Endothelial cell of umbilical vein (primary cell): ENCODE measurements at regions of chr4 and their contacts with region 1.

Region 1: DNA sequence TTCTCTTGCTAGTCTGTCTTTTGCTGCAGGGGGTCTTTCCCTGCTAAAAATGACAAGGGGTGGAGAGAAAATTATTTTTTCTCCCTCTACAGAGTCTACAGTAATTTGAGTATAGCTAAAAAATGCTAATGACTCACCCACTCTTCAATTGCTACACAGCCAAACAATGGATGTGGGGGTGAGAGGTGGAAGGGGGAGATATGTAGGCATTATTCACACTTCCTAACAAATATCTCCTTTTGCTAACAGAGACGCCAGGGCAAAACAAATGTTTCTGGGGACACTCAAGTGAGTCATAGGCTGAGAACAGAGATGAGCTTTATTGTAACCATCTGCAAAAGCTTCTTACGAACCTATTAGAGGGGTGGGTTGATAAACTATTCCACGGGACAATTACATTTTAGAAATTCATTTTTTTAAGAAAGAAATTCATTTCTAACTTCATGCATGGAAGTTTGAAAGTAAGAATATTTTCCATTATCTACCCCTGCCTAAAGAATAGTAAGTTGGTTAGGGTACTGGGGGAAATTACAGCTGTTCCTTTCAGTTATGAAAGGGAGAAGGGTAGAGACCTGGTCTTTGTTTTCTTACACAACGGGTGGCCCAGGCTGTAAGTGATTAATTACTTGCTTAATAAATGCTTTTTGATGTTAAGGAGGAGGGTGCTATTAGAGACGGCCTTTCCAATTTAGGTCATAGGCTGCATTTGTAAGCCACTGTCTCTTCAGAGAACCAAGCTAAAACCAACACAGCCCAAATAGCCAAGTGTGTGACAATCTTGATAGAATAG is 12.8 kb downstream of the SCD5 start:
- DNase-seq: peak; percentile 98
- H3K4me3 ChIP-seq: peak overlapping the region; percentile 12 to 69 (median 21)
- H3K27ac ChIP-seq: peak overlapping the region; percentile 98
- H3K4me1 ChIP-seq: peaks cover 44% of the 10 kb centered on the region
- H3K27me3 ChIP-seq: no peaks in the 10 kb centered on the region
- CTCF ChIP-seq: no peak
- POLR2A ChIP-seq: no peak

Region 2: DNA sequence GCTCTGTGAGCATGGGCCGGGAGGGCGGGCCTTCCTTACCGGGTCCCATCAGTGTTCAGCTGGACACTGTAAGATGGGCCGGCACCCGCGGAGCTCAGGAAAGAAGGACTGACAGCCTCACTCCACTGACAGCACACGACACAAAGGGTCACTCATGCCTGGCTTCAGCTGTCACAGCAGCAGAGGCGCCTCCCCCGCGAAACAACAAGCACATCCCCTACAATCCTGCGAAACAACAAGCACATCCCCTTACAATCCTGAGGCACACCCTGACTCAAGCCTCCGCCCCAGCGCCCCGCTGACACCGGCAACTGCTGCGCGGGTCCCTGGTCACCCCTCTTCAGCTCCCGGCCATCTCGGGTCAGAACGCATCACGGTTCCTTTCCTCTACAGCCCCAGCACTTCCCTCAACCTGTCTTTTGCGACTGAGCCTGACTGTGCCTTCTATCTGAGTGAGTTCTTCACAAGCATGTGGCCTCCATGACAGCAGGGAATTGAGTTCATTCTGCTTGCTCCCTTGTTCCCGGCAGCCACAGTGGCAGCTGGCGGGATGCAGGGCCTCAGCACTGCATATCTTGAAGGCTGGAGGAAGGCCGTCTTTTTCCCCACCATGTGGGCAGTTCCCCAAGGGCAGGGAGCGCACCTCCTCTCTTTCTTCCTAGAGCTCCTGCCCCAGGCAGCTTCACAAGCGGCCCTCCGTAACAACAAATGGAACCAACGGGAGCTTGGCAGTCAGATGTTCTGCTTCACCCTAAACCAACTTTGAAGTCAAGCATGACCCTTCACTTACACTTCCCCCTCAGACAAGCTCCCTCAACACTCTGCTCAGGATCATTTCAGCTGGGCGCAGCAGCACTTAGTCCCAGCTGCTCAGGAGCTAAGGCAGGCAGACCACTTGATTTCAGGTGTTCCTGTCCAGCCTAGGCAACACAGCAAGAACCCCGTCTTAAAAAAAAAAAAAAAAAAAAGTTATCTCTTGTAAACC is 26.8 kb before region 1 on chr4:
- CTCF ChIA-PET with region 1: no interaction called
- POLR2A ChIA-PET with region 1: no interaction called
- dilution Hi-C with region 1: no loop called
- intact Hi-C with region 1: no loop called
- DNase-seq: no peak
- H3K4me3 ChIP-seq: no peak overlapping the region
- H3K27ac ChIP-seq: no peak overlapping the region
- H3K4me1 ChIP-seq: no peaks in the 10 kb centered on the region
- H3K27me3 ChIP-seq: no peaks in the 10 kb centered on the region
- CTCF ChIP-seq: no peak
- POLR2A ChIP-seq: no peak

Region 3: DNA sequence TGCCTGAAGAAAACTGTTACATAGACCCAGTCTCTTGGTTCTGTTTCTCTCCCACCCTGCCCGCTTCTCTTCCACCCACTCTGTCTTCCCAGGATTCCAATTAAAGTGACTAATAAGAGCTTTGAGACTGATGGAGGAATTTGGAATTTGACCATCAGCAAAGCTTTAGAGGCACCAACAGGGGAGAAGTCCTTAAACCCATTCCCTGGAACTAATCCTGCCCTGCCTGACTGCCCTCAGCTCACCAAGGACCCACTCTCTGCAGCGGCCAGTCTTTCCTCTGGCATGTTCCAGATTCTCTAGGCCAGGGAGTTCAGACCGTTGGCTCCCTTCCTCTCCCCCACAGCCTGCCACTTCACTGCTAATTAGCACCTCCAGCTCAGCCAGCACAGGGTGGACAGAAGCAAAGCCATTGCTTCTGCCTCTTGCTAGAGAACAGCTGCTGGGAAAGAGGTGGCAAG is 11.1 kb before region 1 on chr4:
- CTCF ChIA-PET with region 1: interaction called, 14 read pairs
- POLR2A ChIA-PET with region 1: no interaction called
- dilution Hi-C with region 1: no loop called
- intact Hi-C with region 1: no loop called
- DNase-seq: no peak
- H3K4me3 ChIP-seq: no peak overlapping the region
- H3K27ac ChIP-seq: no peak overlapping the region
- H3K4me1 ChIP-seq: no peaks in the 10 kb centered on the region
- H3K27me3 ChIP-seq: no peaks in the 10 kb centered on the region
- CTCF ChIP-seq: no peak
- POLR2A ChIP-seq: no peak

Region 4: GRCh38 chr4:82798168-82799005 is 12.6 kb after region 1 on chr4 and contains the start of gene SCD5:
- CTCF ChIA-PET with region 1: interaction called, 49 read pairs
- POLR2A ChIA-PET with region 1: interaction called, 12 read pairs
- dilution Hi-C with region 1: no loop called
- intact Hi-C with region 1: loop called (anchors 1 kb)
- DNase-seq: peak; percentile 76
- H3K4me3 ChIP-seq: peak within 1 kb of the TSS; percentile 79 to 91 (median 82)
- H3K27ac ChIP-seq: peak within 1 kb of the TSS; percentile 8
- H3K4me1 ChIP-seq: peaks cover 18% of the 10 kb centered on the region
- H3K27me3 ChIP-seq: peaks cover 0 to 3% of the 10 kb centered on the region in 2 experiments
- CTCF ChIP-seq: no peak
- POLR2A ChIP-seq: no peak
- total RNA-seq, gene SCD5: 35.8 and 38.4 TPM in 2 replicates